Spleen (tissue), 13 donors: ENCODE measurements at regions of chr1 and their contacts with region 1.

Region 1: GRCh38 chr1:40612345-40612831 is 53.1 kb downstream of the RIMS3 start:
- DNase-seq: no peak
- H3K4me3 ChIP-seq: no peak overlapping the region
- H3K27ac ChIP-seq: no peak overlapping the region
- H3K4me1 ChIP-seq: no peaks in the 10 kb centered on the region
- H3K27me3 ChIP-seq: no peaks in the 10 kb centered on the region
- CTCF ChIP-seq: peak; percentile 70 to 87 (median 81)
- POLR2A ChIP-seq: no peak

Region 2: GRCh38 chr1:40650075-40650474 is 37.7 kb after region 1 on chr1:
- intact Hi-C with region 1: no loop called
- DNase-seq: peak; percentile 61
- H3K4me3 ChIP-seq: no peak overlapping the region
- H3K27ac ChIP-seq: no peak overlapping the region
- H3K4me1 ChIP-seq: peaks cover 0 to 4% (median 0%) of the 10 kb centered on the region in 6 donors
- H3K27me3 ChIP-seq: peaks cover 0 to 17% (median 4%) of the 10 kb centered on the region in 7 donors
- CTCF ChIP-seq: peak in 3 of 11 experiments; percentile 26 to 41 (median 33)
- POLR2A ChIP-seq: no peak

Region 3: DNA sequence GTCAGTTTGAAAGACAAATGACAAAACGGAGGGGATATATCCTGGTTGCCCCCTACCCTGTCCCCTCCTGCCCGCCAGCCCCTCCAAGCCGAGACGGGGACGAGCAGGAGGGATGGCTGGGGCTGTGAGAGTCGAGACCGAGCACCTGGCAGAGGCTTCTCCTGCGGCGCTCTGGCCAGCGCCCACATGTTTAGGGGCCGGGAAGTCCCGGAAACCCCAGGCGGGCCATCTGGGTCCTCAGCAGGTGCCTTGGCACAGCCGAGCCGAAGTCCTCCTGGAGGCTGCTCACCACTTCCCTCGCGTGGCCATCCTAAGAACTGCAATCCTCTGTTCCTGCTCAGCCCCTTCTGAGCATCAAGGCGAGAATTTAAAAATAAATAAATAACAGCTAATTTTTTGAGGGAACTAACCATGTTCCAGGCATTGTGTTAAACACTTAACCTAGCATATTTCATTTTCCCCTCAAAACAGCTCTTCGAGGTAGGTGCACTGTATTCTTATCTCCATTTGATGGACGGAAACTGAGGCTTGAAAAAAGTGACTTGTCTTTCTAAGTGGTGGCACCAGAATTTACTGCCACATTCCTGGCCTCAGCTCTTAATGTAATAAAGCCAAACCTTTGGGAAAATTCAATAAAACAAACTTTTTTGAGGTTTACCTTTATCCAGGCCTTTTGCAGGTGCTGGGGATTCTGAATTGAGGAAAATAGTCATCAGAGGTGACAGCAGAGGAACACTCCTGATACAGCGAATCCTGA is 56.6 kb after region 1 on chr1:
- intact Hi-C with region 1: loop called (anchors 5 kb)
- DNase-seq: peak; percentile 94
- H3K4me3 ChIP-seq: peak overlapping the region in 4 of 8 donors; percentile 14 to 57 (median 24)
- H3K27ac ChIP-seq: no peak overlapping the region
- H3K4me1 ChIP-seq: peaks cover 3 to 44% (median 29%) of the 10 kb centered on the region in 6 donors
- H3K27me3 ChIP-seq: no peaks in the 10 kb centered on the region
- CTCF ChIP-seq: peak; percentile 82 to 98 (median 94)
- POLR2A ChIP-seq: no peak

Region 4: GRCh38 chr1:40951943-40952743 is 339.8 kb after region 1 on chr1:
- intact Hi-C with region 1: loop called (anchors 10 kb)
- DNase-seq: peak; percentile 85
- H3K4me3 ChIP-seq: no peak overlapping the region
- H3K27ac ChIP-seq: no peak overlapping the region
- H3K4me1 ChIP-seq: peaks cover 0 to 39% (median 21%) of the 10 kb centered on the region in 6 donors
- H3K27me3 ChIP-seq: peaks cover 0 to 41% (median 4%) of the 10 kb centered on the region in 7 donors
- CTCF ChIP-seq: peak; percentile 45 to 89 (median 83)
- POLR2A ChIP-seq: no peak